KBM-7 (cell line): ENCODE measurements at regions of chrX and their contacts with region 1.

Region 1: DNA sequence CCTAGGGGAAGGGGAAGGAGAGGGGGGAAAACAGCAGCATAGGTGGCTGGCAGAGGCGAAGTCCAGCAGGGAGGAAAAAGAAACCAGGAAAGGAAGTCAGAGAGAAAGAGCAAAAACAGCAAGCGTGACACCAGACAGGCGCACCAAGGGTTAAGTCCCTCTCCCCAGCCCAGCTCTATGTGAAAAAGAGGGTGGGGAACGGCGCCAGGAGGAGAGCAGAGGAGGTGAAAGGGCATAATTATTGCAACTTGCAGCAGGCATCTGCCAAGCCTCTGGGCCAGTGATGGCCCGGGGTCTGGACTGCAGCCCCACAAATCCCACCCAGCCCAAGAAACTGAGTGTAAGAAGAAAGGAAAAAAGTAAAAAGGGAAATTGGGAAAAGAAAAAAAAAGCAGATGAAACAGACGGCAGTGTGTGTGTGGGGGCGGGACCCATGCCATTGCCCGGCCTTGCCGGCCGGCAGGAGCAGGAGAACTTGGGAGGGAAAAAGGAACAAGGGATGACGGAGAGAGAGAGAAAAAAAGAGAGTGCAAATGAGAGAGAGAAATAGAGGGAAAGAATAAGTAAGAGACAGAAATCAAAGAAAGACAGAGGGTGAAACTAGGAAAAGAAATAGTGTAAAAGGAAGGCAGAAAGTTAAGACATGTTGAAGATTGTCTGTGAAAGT is 14.1 kb upstream of the RHOXF2 start:
- DNase-seq: peak; percentile 19

Region 2: GRCh38 chrX:119516157-119516702 is 628.1 kb before region 1 on chrX:
- in situ Hi-C with region 1: loop called (anchors 25 kb)
- DNase-seq: peak; percentile 92

Region 3: DNA sequence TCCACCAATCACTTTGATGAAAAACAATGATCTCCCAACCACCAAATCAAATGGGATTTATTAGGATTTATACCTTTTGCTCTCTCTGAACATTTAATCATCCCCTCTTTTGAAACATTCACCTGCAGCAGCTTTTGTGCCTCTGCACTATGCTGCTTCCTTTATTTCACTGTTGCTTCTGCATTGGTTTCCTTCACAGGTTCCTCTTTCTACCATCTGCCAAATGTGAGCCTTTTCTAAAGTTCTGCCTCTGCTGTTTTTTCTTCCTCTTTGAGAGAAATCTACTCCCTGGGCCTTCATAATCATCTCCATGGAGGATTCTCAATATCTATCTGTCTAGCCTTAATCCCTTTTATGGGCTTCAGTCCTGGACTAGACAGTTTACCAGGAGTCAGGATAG is 391.8 kb after region 1 on chrX:
- in situ Hi-C with region 1: no loop called
- DNase-seq: peak; percentile 83